ENCODE measurements at regions of chr21 and their contacts with region 1.

Region 1: DNA sequence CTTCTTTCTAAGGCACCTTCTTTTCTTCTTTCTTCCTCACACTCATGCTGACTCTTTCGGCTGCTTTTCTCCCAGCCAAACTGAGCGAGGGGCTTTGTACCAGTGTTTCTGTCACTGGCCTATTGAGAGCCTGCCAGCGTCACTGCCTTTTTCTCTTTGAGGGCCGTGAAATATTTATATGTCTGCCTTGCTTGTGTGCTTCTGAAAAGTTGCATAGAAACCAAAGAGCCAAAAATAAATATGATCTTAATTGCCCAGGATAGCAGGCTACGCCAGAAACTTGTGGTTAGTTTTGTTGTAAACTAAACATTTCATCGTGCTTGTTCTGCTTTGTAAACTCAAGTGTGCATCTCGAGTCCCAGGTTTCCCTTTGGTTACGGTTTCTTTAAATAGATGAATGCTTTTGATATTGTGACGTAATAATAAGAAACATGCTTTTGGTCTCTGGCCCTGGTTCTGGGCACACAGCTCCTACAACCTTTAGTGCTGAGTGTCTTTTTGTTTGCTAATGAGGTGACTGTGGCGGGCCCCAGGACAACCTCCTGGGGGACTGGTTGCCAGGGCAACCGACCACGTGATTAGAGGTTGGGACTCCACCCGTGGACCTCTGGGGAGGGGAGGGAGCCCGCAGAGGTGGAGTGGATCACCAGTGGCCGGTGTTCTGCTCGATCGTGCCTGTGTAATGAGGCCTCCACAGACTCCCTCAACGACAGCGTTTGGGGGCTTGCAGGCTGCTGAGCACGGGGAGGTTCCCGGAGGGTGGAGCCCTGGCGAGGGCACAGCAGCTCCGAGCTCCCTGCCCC is 10.9 kb downstream of the SLC37A1 start:
- DNase-seq: peak; percentile 82
- ATAC-seq: peak; percentile 47
- H3K4me3 Mint-ChIP-seq: peak overlapping the region; percentile 42
- H3K27ac Mint-ChIP-seq: peak overlapping the region; percentile 36
- H3K4me1 Mint-ChIP-seq: peaks cover 45% of the 10 kb centered on the region
- H3K27me3 Mint-ChIP-seq: no peaks in the 10 kb centered on the region
- CTCF ChIP-seq: no peak

Region 2: GRCh38 chr21:42467140-42467983 is 57.2 kb before region 1 on chr21:
- CTCF ChIA-PET with region 1: interaction called, 4 read pairs
- POLR2A ChIA-PET with region 1: no interaction called
- intact Hi-C with region 1: loop called (anchors 5 kb)
- DNase-seq: peak; percentile 51
- ATAC-seq: no peak
- H3K4me3 Mint-ChIP-seq: no peak overlapping the region
- H3K27ac Mint-ChIP-seq: no peak overlapping the region
- H3K4me1 Mint-ChIP-seq: peaks cover 41% of the 10 kb centered on the region
- H3K27me3 Mint-ChIP-seq: no peaks in the 10 kb centered on the region
- CTCF ChIP-seq: no peak

Region 3: GRCh38 chr21:42513985-42514882 is 10.3 kb before region 1 on chr21:
- CTCF ChIA-PET with region 1: interaction called, 3 read pairs
- POLR2A ChIA-PET with region 1: interaction called, 31 read pairs
- intact Hi-C with region 1: no loop called
- DNase-seq: peak; percentile 77
- ATAC-seq: peak; percentile 77
- H3K4me3 Mint-ChIP-seq: peak overlapping the region; percentile 77
- H3K27ac Mint-ChIP-seq: peak overlapping the region; percentile 63
- H3K4me1 Mint-ChIP-seq: peaks cover 20% of the 10 kb centered on the region
- H3K27me3 Mint-ChIP-seq: no peaks in the 10 kb centered on the region
- CTCF ChIP-seq: no peak

Region 4: GRCh38 chr21:42554286-42554961 is 29.9 kb after region 1 on chr21:
- CTCF ChIA-PET with region 1: no interaction called
- POLR2A ChIA-PET with region 1: no interaction called
- intact Hi-C with region 1: no loop called
- DNase-seq: no peak
- ATAC-seq: no peak
- H3K4me3 Mint-ChIP-seq: no peak overlapping the region
- H3K27ac Mint-ChIP-seq: no peak overlapping the region
- H3K4me1 Mint-ChIP-seq: no peaks in the 10 kb centered on the region
- H3K27me3 Mint-ChIP-seq: no peaks in the 10 kb centered on the region
- CTCF ChIP-seq: no peak

Region 5: GRCh38 chr21:42581993-42582786 is 57.6 kb after region 1 on chr21:
- CTCF ChIA-PET with region 1: no interaction called
- POLR2A ChIA-PET with region 1: no interaction called
- intact Hi-C with region 1: no loop called
- DNase-seq: no peak
- ATAC-seq: no peak
- H3K4me3 Mint-ChIP-seq: no peak overlapping the region
- H3K27ac Mint-ChIP-seq: no peak overlapping the region
- H3K4me1 Mint-ChIP-seq: no peaks in the 10 kb centered on the region
- H3K27me3 Mint-ChIP-seq: no peaks in the 10 kb centered on the region
- CTCF ChIP-seq: no peak

Region 6: DNA sequence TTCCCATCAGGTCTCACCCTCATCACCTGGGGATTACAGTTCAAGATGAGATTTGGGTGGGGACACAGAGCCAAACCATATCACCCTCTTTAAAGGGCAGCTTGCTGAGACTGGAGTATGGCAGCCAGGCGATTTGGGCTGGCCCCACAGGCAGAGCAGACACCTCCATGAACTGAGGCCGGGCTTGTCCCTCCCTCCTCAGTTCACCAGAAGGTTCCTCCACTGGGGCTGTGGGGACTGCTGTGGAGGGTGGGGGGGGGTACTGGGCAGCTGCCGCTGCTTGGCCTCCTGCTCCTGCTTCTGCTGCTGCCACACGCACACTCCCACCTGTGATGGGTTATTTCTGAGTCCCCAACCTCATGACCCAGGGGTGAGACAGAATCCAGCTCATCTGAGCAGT is 74.9 kb after region 1 on chr21:
- CTCF ChIA-PET with region 1: no interaction called
- POLR2A ChIA-PET with region 1: no interaction called
- intact Hi-C with region 1: no loop called
- DNase-seq: no peak
- ATAC-seq: no peak
- H3K4me3 Mint-ChIP-seq: no peak overlapping the region
- H3K27ac Mint-ChIP-seq: no peak overlapping the region
- H3K4me1 Mint-ChIP-seq: no peaks in the 10 kb centered on the region
- H3K27me3 Mint-ChIP-seq: no peaks in the 10 kb centered on the region
- CTCF ChIP-seq: no peak

Region 7: DNA sequence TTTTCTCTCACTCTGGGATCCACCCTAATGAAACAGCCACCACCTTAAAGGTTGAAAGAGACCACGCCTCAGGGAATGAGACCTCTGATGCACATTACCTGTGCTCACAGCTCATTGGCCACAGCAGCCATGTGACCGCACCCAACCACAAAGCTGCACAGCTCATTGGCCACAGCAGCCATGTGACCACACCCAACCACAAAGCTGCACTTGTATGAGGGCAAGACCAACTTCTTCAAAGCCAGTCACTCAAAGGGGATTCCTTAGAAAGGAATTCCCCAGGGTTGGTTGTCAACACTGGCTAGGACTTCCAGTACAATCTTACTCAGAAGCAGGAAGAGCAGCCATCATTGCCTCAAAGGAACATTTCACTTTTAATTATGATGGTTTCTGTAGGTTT is 85.3 kb after region 1 on chr21:
- CTCF ChIA-PET with region 1: no interaction called
- POLR2A ChIA-PET with region 1: no interaction called
- intact Hi-C with region 1: no loop called
- DNase-seq: peak; percentile 86
- ATAC-seq: peak; percentile 90
- H3K4me3 Mint-ChIP-seq: peak overlapping the region; percentile 37
- H3K27ac Mint-ChIP-seq: peak overlapping the region; percentile 20
- H3K4me1 Mint-ChIP-seq: peaks cover 11% of the 10 kb centered on the region
- H3K27me3 Mint-ChIP-seq: no peaks in the 10 kb centered on the region
- CTCF ChIP-seq: no peak

Measured in activated CD8-positive, alpha-beta T cell treated with anti-CD3 and anti-CD28 coated beads for 36 hours (primary cell).